RWPE1 (cell line): ENCODE measurements at regions of chr6 and their contacts with region 1.

Region 1: GRCh38 chr6:30730601-30731435 is 10.7 kb downstream of the TUBB start:
- DNase-seq: peak; percentile 90
- H3K27ac ChIP-seq: peak overlapping the region; percentile 66
- CTCF ChIP-seq: peak; percentile 88

Region 2: GRCh38 chr6:30493643-30494250 is 237.1 kb before region 1 on chr6:
- CTCF ChIA-PET with region 1: no interaction called
- POLR2A ChIA-PET with region 1: interaction called, 18 read pairs
- DNase-seq: no peak
- H3K27ac ChIP-seq: peak overlapping the region; percentile 33; the same call in 1 of the 2 replicates
- CTCF ChIP-seq: no peak

Region 3: GRCh38 chr6:30678964-30679726 is 51.7 kb before region 1 on chr6:
- CTCF ChIA-PET with region 1: interaction called, 27 read pairs
- POLR2A ChIA-PET with region 1: no interaction called
- DNase-seq: peak; percentile 59
- H3K27ac ChIP-seq: peak overlapping the region; percentile 97
- CTCF ChIP-seq: peak; percentile 92

Region 4: GRCh38 chr6:30684386-30685156 is 46.2 kb before region 1 on chr6:
- CTCF ChIA-PET with region 1: interaction called, 27 read pairs
- POLR2A ChIA-PET with region 1: no interaction called
- DNase-seq: peak; percentile 45
- H3K27ac ChIP-seq: peak overlapping the region; percentile 97
- CTCF ChIP-seq: no peak